Panc1 (cell line): ENCODE measurements at regions of chr16 and their contacts with region 1.

Region 1: GRCh38 chr16:63461248-63461841 is 1425.1 kb upstream of the CDH8 start:
- DNase-seq: peak; percentile 10
- ATAC-seq: no peak
- H3K4me3 ChIP-seq: no peak overlapping the region
- H3K27ac ChIP-seq: no peak overlapping the region
- H3K4me1 ChIP-seq: no peaks in the 10 kb centered on the region
- H3K27me3 ChIP-seq: no peaks in the 10 kb centered on the region
- CTCF ChIP-seq: peak; percentile 35; the same call in 1 of the 2 replicates

Region 2: GRCh38 chr16:65117811-65118448 is 1656.6 kb after region 1 on chr16:
- CTCF ChIA-PET with region 1: no interaction called
- POLR2A ChIA-PET with region 1: no interaction called
- in situ Hi-C with region 1: no loop called
- intact Hi-C with region 1: loop called (anchors 10 kb)
- DNase-seq: peak; percentile 57
- ATAC-seq: peak; percentile 85
- H3K4me3 ChIP-seq: 0 out of 4 replicates have a peak overlapping the region, but pooled peaks of 1 of the 2 experiments have one; percentile 8
- H3K27ac ChIP-seq: no peak overlapping the region
- H3K4me1 ChIP-seq: 0 out of 2 replicates have a peak, but pooled peaks cover 3% of the 10 kb centered on the region
- H3K27me3 ChIP-seq: no peaks in the 10 kb centered on the region
- CTCF ChIP-seq: peak; percentile 85